SK-N-SH (cell line): ENCODE measurements at regions of chr2 and their contacts with region 1.

Region 1: DNA sequence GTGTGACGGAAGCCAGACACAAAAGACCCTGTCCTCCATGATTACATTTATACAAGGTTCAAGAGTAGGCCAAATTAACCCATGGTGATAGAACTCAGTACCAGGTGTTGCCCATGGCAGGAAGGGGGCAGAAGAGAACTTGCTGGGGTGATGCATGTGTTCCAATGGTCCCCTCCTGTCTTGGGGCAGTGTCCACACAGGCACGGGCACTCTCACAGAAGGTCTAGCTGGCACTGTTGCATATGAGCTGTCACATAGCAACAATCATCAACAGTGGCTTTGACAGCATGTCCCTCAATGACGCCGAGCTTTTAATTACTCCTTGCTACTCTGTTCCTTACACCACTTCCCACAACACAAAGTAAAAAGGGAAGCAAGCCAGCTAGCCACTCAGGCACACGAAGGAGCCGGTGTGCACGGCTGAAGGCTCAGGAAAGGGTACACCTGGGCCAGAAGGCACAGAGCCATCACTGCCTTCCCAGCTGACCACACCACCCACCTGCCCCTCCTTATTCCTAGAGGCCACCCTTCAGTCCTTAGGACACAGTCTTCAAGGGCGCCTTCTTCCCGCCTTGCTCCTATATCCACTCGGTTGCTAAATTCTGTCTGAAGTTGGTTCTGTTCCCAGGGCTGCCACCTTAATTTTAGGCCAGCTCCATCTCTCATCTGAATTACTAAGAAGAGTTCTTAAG is 28.9 kb downstream of the RPL31 start:
- DNase-seq: no peak
- H3K4me3 ChIP-seq: no peak overlapping the region
- H3K27ac ChIP-seq: no peak overlapping the region
- H3K4me1 ChIP-seq: no peaks in the 10 kb centered on the region; a peak in 1 of 4 replicates
- H3K27me3 ChIP-seq: no peaks in the 10 kb centered on the region
- CTCF ChIP-seq: no peak
- EP300 ChIP-seq: no peak
- RAD21 ChIP-seq: no peak

Region 2: GRCh38 chr2:100554798-100555407 is 476.1 kb before region 1 on chr2:
- CTCF ChIA-PET with region 1: no interaction called
- POLR2A ChIA-PET with region 1: no interaction called
- DNase-seq: no peak
- H3K4me3 ChIP-seq: no peak overlapping the region
- H3K27ac ChIP-seq: no peak overlapping the region
- H3K4me1 ChIP-seq: no peaks in the 10 kb centered on the region
- H3K27me3 ChIP-seq: no peaks in the 10 kb centered on the region
- CTCF ChIP-seq: no peak
- EP300 ChIP-seq: no peak
- RAD21 ChIP-seq: no peak

Region 3: DNA sequence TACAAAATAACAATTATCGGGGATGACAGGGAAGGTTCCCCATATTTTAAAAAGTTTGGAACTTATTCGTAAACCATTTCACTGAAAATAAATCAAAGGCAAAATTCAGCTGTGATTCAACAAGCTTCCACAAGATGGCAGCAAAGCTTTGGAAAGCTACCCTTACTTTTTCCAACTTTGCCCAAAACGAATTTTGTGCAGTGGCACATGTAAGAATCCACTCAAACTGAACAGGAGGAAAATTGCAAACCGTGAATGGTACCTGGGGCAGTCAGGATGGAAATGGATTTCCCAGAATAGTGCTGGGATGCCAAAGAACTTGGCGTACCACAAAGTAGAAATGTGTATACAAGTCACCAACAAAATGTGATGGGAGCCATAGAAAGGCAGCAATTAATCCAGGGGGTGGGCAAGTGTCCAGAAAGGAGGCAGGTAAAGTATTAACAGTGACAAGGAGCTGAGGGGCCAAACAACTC is 18.3 kb before region 1 on chr2:
- CTCF ChIA-PET with region 1: interaction called, 13 read pairs
- POLR2A ChIA-PET with region 1: no interaction called
- DNase-seq: peak; percentile 45
- H3K4me3 ChIP-seq: no peak overlapping the region
- H3K27ac ChIP-seq: no peak overlapping the region
- H3K4me1 ChIP-seq: no peaks in the 10 kb centered on the region; a peak in 1 of 4 replicates
- H3K27me3 ChIP-seq: no peaks in the 10 kb centered on the region
- CTCF ChIP-seq: peak; percentile 90
- EP300 ChIP-seq: no peak
- RAD21 ChIP-seq: peak; percentile 85

Region 4: GRCh38 chr2:101151141-101151858 is 120.3 kb after region 1 on chr2 and contains the start of gene TBC1D8:
- CTCF ChIA-PET with region 1: interaction called, 99 read pairs
- POLR2A ChIA-PET with region 1: interaction called, 4 read pairs
- DNase-seq: peak; percentile 97
- H3K4me3 ChIP-seq: peak within 1 kb of the TSS; percentile 76 to 78
- H3K27ac ChIP-seq: peak within 1 kb of the TSS; percentile 31 to 91; a peak in 3 of 4 replicates
- H3K4me1 ChIP-seq: peaks cover 0 to 28% of the 10 kb centered on the region in 2 experiments; a peak in 2 of 4 replicates
- H3K27me3 ChIP-seq: no peaks in the 10 kb centered on the region
- CTCF ChIP-seq: no peak
- EP300 ChIP-seq: 0 out of 4 replicates have a peak, but pooled peaks of 1 of the 2 experiments have one; percentile 16
- RAD21 ChIP-seq: no peak
- polyA plus RNA-seq, gene TBC1D8: 5.3 and 7.0 TPM in 2 replicates

Region 5: GRCh38 chr2:101188683-101189405 is 157.8 kb after region 1 on chr2:
- CTCF ChIA-PET with region 1: interaction called, 40 read pairs
- POLR2A ChIA-PET with region 1: no interaction called
- DNase-seq: peak; percentile 74
- H3K4me3 ChIP-seq: no peak overlapping the region
- H3K27ac ChIP-seq: no peak overlapping the region
- H3K4me1 ChIP-seq: peaks cover 0 to 2% of the 10 kb centered on the region in 2 experiments; a peak in 1 of 4 replicates
- H3K27me3 ChIP-seq: no peaks in the 10 kb centered on the region
- CTCF ChIP-seq: peak; percentile 70
- EP300 ChIP-seq: no peak
- RAD21 ChIP-seq: peak; percentile 67